Calu3 (cell line): ENCODE measurements at regions of chr1 and their contacts with region 1.

Region 1: DNA sequence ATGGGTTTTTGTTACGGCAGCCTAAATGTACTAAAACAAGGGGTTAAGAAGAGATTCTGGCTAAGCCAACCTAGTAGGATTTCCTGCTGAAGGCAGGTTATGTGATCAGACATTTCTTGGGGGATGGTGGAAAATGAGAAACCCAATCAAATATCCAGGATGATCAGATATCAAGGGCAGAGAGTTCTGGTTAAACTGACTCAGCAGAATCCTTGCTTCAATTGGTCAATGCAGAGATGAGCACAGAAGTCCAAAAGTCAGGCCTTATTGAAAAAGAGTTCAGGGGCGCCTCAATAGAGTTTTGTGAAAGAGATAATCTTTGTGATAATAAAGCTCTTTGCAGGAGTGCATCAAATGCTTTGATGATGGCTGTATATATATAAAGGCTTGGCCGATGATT is 237.1 kb downstream of the AMY1C start:
- DNase-seq: no peak
- H3K4me3 Mint-ChIP-seq: no peak overlapping the region
- H3K27ac Mint-ChIP-seq: no peak overlapping the region
- H3K4me1 Mint-ChIP-seq: no peaks in the 10 kb centered on the region
- H3K27me3 Mint-ChIP-seq: no peaks in the 10 kb centered on the region
- CTCF ChIP-seq: no peak

Region 2: GRCh38 chr1:103960710-103961109 is 26.1 kb before region 1 on chr1:
- CTCF ChIA-PET with region 1: interaction called, 11 read pairs
- intact Hi-C with region 1: no loop called
- DNase-seq: no peak
- H3K4me3 Mint-ChIP-seq: no peak overlapping the region
- H3K27ac Mint-ChIP-seq: no peak overlapping the region
- H3K4me1 Mint-ChIP-seq: no peaks in the 10 kb centered on the region
- H3K27me3 Mint-ChIP-seq: no peaks in the 10 kb centered on the region
- CTCF ChIP-seq: no peak

Region 3: GRCh38 chr1:104973516-104973915 is 986.7 kb after region 1 on chr1:
- CTCF ChIA-PET with region 1: no interaction called
- intact Hi-C with region 1: no loop called
- DNase-seq: no peak
- H3K4me3 Mint-ChIP-seq: no peak overlapping the region
- H3K27ac Mint-ChIP-seq: no peak overlapping the region
- H3K4me1 Mint-ChIP-seq: no peaks in the 10 kb centered on the region
- H3K27me3 Mint-ChIP-seq: no peaks in the 10 kb centered on the region
- CTCF ChIP-seq: no peak